ENCODE measurements at regions of chr2 and their contacts with region 1.

Region 1: GRCh38 chr2:163601377-163601776 is 134.4 kb downstream of the FIGN start:
- DNase-seq: peak in 1 of 42 donors; percentile 51

Region 2: DNA sequence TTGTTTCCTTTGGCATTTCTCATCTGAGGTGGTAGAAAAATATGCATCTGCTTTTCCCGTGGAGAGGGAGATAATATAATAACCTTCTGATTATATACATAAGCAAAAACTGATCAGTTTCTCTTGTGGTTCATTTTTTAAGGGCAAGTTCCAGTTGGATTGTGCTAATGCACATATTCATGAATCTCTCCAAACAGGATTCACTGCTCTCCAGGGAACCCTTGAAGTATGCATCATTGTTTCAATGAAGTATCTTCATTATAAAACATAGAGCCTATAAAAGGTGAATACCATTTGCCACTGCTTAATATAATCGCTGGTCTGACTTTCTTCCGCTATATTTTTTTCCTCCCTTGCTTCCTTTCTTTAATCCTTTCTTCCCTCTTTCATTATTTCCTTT is 250.2 kb before region 1 on chr2:
- intact Hi-C with region 1: loop called (anchors 10 kb)
- DNase-seq: no peak

Region 3: GRCh38 chr2:163735685-163736432 is 134.5 kb after region 1 on chr2 and contains the start of gene FIGN:
- intact Hi-C with region 1: loop called (anchors 5 kb)
- DNase-seq: peak; percentile 56 to 93 (median 84)

Region 4: GRCh38 chr2:164015328-164016123 is 414.1 kb after region 1 on chr2:
- intact Hi-C with region 1: no loop called
- DNase-seq: peak in 1 of 42 donors; percentile 16